ENCODE measurements at regions of chr11 and their contacts with region 1.

Region 1: GRCh38 chr11:9265211-9266131 is at the start of gene DENND5A:
- DNase-seq: peak; percentile 36
- H3K4me3 Mint-ChIP-seq: peak within 1 kb of the TSS; percentile 82
- H3K27ac Mint-ChIP-seq: peak within 1 kb of the TSS; percentile 80
- H3K4me1 Mint-ChIP-seq: peaks cover 33% of the 10 kb centered on the region
- H3K27me3 Mint-ChIP-seq: peaks cover 35% of the 10 kb centered on the region
- total RNA-seq, gene DENND5A: 45.6 and 47.6 TPM in 2 replicates

Region 2: DNA sequence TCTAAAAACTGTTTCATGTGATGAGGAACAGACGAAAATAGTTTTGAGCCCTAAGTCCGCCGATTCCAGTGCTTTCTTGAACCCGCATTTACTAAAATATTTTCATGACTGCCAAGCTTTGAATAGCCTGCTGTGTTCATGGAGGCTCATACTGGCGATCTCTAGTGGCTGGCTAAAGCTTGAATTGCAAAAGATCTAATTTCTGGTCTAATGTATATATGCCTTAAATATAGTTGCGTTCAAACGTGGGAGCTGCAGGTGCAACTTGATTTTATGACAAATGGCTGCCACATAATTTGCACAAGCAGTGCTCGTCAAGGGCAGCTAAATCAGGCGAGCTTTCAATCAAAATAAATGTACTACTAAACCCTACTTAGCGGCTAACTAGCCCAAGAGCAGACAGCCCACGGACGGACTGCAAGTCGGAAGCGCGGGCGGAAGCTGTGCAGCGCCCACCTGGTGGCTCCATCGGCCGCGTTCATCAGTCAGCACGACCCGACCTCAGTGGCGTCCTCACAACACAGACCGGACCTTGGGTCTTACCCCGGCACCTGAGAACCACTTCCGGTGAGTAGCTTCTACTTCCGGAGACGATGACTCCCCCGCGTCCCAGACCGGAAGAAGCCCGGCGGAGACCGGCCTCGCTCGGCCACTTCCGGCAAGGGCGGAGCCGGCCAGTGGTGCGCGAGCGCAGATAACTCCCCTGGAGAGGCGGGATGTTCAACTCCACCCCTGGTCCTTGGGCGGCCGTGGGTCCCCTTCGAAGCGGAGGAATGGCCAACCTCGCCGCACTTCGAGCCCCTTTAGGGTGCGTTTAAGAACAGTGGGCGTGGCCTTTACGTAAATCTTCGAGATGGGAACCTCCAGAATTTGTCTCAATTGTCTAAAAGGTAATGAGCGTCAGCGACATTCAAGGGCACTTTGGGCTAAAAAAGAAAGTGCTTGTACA is 576.8 kb before region 1 on chr11:
- intact Hi-C with region 1: loop called (anchors 5 kb)
- DNase-seq: peak; percentile 82
- H3K4me3 Mint-ChIP-seq: peak overlapping the region; percentile 94
- H3K27ac Mint-ChIP-seq: peak overlapping the region; percentile 91
- H3K4me1 Mint-ChIP-seq: peaks cover 60% of the 10 kb centered on the region
- H3K27me3 Mint-ChIP-seq: no peaks in the 10 kb centered on the region

Region 3: DNA sequence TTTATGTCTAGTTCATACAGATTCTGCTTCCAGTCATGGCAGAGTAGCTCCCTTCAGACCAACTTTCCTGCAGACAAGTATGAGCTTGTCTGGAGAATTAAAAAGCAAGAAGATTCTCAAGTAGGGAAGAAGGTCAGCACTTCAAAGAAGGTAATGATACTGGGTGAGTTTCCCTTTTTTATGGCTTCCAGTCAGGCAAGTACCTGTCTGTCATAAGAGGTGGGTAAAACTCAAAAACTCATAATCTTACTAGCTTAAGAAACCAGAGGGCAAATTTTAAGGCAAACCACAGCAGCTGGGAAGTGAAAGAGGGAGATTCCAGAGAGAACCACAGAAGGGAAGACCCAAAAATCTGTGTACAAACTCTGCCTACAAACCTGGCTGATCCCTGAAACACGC is 54.5 kb before region 1 on chr11:
- intact Hi-C with region 1: loop called (anchors 1 kb)
- DNase-seq: no peak
- H3K4me3 Mint-ChIP-seq: peak overlapping the region; percentile 41
- H3K27ac Mint-ChIP-seq: peak overlapping the region; percentile 21
- H3K4me1 Mint-ChIP-seq: peaks cover 63% of the 10 kb centered on the region
- H3K27me3 Mint-ChIP-seq: peaks cover 2% of the 10 kb centered on the region

Region 4: DNA sequence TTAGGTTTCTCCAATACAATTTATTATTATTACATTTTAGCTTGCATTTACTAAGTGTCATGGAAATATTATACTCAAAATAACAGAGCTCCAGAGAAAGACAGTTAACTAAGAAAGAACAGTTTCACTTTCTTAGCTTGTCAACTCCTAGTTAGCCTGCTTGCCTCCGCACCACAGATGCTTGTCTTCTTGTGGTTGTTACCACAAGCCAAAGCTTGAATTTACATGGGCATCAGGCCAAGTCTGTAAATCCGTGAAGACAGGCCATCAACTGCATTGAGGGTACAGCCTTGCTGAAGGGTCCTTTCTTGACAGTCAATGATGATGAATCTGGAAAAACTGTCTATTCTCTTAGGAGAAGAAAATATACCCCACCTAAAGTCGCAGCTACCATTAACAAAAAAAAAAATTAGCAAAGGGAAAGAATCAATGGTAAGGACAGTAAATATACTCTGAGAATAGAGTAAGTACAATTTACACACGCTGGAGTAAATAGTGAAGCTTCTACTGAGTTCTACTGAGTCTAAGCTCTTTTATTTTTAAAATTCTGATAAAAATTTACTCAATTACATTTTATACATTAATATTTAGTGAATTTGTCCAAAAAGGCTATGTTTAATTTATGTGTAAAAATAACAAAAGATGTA is 15.3 kb after region 1 on chr11:
- intact Hi-C with region 1: loop called (anchors 1 kb)
- DNase-seq: peak; percentile 64
- H3K4me3 Mint-ChIP-seq: peak overlapping the region; percentile 60
- H3K27ac Mint-ChIP-seq: peak overlapping the region; percentile 57
- H3K4me1 Mint-ChIP-seq: peaks cover 15% of the 10 kb centered on the region
- H3K27me3 Mint-ChIP-seq: peaks cover 6% of the 10 kb centered on the region

Region 5: DNA sequence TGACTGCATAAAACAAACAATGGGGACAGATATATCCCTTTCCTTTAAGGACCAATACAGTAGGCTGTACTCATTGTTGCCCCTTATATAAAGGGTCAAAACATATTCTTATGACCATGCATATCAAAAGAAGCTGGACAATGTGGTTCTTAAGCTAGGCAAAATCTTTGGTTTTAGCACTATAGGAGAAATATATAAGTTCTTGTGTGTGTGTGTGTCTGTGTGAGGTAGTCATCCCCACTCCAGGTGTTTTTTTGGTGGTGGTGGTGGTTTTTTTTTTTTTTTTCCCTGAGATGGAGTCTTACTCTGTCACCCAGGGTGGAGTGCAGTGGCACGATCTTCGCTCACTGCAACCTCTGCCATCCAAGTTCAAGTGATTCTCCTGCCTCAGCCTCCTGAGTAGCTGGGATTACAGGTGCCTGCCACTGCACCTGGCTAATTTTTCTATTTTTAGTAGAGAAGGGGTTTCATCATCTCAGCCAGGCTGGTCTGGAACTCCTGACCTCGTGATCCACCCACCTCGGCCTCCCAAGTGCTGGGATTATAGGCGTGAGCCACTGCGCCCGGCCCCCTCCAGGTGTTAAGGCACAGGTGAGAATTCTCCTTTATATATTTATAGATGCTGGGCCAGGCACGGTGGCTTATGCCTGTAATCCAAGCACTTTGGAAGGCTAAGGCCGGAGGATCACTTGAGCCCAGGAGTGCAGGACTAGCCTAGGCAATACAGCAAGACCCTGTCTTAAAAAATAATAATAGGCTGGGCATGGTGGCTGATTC is 183.3 kb after region 1 on chr11:
- intact Hi-C with region 1: no loop called
- DNase-seq: no peak
- H3K4me3 Mint-ChIP-seq: no peak overlapping the region
- H3K27ac Mint-ChIP-seq: no peak overlapping the region
- H3K4me1 Mint-ChIP-seq: peaks cover 9% of the 10 kb centered on the region
- H3K27me3 Mint-ChIP-seq: no peaks in the 10 kb centered on the region

Region 6: DNA sequence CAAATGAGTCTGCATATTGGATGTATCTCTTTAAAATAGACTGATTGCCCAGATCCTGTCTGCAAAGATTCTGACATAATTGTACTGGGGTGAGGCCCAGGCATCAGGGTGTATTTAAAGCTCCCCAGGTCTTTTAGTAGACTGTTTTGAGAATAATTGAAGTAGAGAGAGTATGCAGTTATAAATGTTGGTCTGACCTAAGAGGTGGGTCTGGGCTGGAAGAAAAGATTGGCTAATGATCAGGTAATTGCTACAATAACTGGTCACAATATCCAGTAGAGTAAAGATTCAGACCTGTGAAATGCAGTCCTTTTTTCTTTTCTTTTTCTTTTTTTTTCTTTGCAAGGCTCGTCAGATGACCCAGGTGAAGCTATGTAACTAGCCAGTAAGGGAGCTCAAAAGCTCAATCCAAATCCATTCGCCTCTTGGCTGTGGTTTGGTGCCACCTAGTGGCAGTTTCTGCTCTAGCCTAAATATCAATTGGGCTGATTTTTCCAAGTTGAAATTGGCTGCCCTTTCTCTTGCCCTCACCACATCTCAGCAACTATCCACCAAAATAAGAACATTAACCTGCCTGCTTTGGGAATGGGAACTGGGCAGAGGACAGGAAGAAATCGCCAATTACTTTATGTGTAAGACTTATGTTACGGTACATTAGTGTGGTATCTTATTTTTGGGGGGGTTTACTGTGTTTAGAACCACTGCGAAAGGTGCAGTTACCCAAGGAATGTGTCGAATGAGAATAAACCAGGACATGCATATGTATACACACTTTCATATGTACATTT is 241.2 kb after region 1 on chr11:
- intact Hi-C with region 1: loop called (anchors 5 kb)
- DNase-seq: peak; percentile 68
- H3K4me3 Mint-ChIP-seq: no peak overlapping the region
- H3K27ac Mint-ChIP-seq: no peak overlapping the region
- H3K4me1 Mint-ChIP-seq: peaks cover 6% of the 10 kb centered on the region
- H3K27me3 Mint-ChIP-seq: no peaks in the 10 kb centered on the region

Region 7: DNA sequence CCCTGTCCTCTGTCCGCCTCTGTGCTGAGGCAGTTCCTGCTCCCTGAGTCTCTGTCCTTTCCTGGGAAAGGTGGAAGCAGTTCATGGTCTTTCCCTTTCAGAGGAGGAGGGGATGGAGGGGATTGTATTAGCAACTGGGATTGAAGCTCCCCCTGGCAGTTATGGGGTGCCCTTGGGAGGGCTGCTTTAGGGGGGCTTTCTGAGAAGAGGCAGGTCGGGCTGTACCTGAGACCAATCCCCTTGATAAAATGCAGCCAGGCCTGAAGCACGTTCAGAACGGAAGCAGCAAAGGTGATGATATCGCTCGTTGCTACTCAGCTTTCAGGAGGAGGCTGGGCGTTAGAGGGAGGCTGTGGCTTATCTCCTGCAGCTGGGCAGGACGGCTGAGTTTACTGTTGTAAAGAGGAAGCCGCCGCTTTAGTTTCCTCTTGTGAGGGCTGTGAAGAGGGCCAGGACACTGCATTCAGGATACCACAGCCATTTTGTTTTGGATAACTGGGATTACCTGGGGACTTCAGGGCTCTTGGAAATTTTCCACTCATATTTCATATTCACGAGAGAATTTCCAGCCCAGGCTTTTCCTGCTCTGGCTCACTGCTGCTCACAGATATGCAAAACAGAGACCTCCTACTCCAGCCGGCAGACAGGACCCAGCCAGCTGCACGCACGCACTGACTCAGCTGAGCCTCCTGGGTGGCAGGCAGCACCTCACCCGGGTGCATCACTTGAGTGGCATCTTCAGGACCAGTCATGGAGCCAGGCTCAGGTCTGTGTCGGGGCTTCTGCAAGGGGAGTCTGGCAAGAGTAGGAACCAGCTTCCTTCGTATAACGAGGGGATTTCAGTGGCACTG is 1190.4 kb after region 1 on chr11:
- intact Hi-C with region 1: loop called (anchors 10 kb)
- DNase-seq: peak; percentile 72
- H3K4me3 Mint-ChIP-seq: peak overlapping the region; percentile 86
- H3K27ac Mint-ChIP-seq: peak overlapping the region; percentile 87
- H3K4me1 Mint-ChIP-seq: peaks cover 80% of the 10 kb centered on the region
- H3K27me3 Mint-ChIP-seq: peaks cover 3% of the 10 kb centered on the region

Measured in activated T-helper 1 cell treated with anti-CD3 and anti-CD28 coated beads, Interleukin-12 subunit alpha, Interleukin-12 subunit beta, Interleukin-2, Interleukin-4 antibody, amounts not matched to agents 30 ng/mL and 10 ng/mL and 1 ng/mL, durations not matched to agents 14 hours and 24 hours and 36 hours (primary cell).